Activated CD4-positive, alpha-beta memory T cell treated with anti-CD3 and anti-CD28 coated beads for 36 hours (primary cell): ENCODE measurements at regions of chr3 and their contacts with region 1.

Region 1: DNA sequence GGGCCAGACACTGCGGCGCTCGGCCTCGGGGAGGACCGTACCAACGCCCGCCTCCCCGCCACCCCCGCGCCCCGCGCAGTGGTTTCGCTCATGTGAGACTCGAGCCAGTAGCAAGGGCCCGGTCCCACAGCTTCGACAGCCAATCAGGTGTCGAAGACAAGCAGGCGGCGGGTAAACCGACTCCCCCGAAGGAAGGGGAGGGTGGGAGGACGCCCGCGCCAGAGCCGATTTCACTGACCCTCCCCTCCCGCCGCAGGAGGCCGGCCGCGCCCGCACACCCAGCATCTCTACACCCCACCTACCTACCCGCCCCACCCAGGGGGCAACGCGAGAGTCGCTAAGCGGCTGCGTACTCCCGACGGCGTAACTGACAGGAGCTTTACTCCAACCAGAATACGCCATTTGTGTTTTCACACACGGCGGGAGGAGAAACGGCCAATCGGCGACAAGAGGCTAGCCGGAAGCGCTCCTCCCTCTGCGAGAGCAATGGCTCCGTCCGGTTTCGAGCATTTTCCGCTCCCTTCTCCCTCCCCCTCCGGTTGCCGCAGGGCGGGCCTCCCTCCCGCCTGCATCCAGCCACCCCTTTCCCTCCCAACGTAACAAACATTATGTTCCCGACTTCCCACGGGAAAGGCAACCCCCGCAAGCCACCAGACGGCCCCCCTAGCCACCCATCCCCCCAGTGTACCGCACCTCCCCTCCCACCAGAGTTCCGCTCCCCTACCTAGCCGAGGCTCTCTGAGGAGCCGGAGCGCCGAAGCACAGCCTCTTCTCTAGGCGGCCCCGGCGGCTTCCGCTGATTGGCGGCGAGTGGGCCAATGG is 504 bp upstream of the SETD5 start:
- DNase-seq: peak; percentile 98
- H3K4me3 Mint-ChIP-seq: peak overlapping the region; percentile 94
- H3K27ac Mint-ChIP-seq: peak overlapping the region; percentile 99
- H3K4me1 Mint-ChIP-seq: peaks cover 63% of the 10 kb centered on the region
- H3K27me3 Mint-ChIP-seq: no peaks in the 10 kb centered on the region

Region 2: DNA sequence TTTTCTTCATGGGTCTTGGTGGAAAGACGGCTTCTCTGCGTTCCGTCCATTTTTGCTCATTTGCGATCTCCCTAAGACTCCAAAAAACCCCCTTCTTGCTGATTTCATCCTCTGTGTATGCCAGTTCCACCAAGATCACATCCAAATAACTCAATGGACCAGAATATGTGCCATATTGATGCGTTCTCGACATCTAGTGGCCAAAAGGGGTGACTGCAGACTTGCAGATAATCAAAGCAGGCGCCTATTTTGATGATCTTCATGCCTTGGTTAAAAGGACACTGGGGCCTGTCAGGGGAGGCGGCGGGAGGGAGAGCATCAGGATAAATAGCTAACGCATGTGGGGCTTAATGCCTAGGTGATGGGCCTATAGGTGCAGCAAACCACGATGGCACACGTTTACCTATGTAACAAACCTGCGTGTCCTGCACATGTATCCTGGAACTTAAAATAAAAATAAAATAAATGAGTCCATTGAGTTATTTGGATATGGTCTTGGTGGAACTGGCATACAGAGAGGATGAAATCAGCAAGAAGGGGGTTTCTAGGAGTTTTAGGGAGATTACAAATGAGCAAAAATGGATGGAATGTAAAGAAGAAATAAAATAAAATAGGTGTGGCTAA is 329.4 kb before region 1 on chr3:
- CTCF ChIA-PET with region 1: no interaction called
- POLR2A ChIA-PET with region 1: no interaction called
- intact Hi-C with region 1: no loop called
- DNase-seq: peak; percentile 40
- H3K4me3 Mint-ChIP-seq: no peak overlapping the region
- H3K27ac Mint-ChIP-seq: no peak overlapping the region
- H3K4me1 Mint-ChIP-seq: no peaks in the 10 kb centered on the region
- H3K27me3 Mint-ChIP-seq: no peaks in the 10 kb centered on the region

Region 3: GRCh38 chr3:9280451-9281219 is 116.3 kb before region 1 on chr3:
- CTCF ChIA-PET with region 1: no interaction called
- POLR2A ChIA-PET with region 1: no interaction called
- intact Hi-C with region 1: no loop called
- DNase-seq: no peak
- H3K4me3 Mint-ChIP-seq: no peak overlapping the region
- H3K27ac Mint-ChIP-seq: no peak overlapping the region
- H3K4me1 Mint-ChIP-seq: no peaks in the 10 kb centered on the region
- H3K27me3 Mint-ChIP-seq: peaks cover 1% of the 10 kb centered on the region

Region 4: GRCh38 chr3:9352917-9353752 is 43.8 kb before region 1 on chr3:
- CTCF ChIA-PET with region 1: interaction called, 11 read pairs
- POLR2A ChIA-PET with region 1: interaction called, 4 read pairs
- intact Hi-C with region 1: loop called (anchors 2 kb)
- DNase-seq: peak; percentile 70
- H3K4me3 Mint-ChIP-seq: no peak overlapping the region
- H3K27ac Mint-ChIP-seq: no peak overlapping the region
- H3K4me1 Mint-ChIP-seq: peaks cover 27% of the 10 kb centered on the region
- H3K27me3 Mint-ChIP-seq: no peaks in the 10 kb centered on the region

Region 5: DNA sequence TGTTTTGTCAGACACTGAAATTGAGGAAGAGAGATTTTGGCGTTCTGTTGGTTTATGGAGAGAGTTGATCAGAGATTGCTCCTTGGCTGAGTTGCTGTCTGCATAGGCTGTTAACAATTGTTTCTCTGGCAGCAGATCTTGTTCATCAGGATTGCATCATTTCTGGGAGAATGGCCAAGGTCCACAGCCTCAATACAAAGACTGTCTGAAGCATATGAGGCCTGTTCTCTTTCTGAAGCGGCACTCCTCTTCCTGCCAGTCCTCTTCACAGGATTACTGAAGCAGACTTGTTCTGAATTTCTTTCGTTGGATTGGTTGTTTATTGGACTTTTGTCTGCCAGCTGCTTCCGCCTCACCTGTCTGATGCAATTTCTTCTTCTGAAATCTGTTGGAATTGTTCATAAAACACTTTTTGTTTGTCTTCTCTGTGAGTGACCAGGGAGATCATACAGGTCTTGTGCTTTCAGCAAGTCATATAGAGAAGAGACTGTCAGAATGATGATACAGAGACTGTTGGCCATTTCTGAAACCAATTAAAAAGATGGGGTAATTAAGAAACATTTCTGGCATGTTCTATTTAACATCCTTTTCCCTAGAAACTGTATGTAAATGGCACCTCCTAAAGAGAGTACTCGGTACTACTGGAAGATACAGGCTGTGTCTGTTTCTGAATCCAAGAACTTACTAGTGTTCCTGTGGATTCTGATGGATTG is 26.0 kb after region 1 on chr3:
- CTCF ChIA-PET with region 1: interaction called, 3 read pairs
- POLR2A ChIA-PET with region 1: interaction called, 9 read pairs
- intact Hi-C with region 1: loop called (anchors 1 kb)
- DNase-seq: peak; percentile 40
- H3K4me3 Mint-ChIP-seq: no peak overlapping the region
- H3K27ac Mint-ChIP-seq: peak overlapping the region; percentile 90
- H3K4me1 Mint-ChIP-seq: peaks cover 39% of the 10 kb centered on the region
- H3K27me3 Mint-ChIP-seq: no peaks in the 10 kb centered on the region

Region 6: GRCh38 chr3:9731206-9732079 is 334.5 kb after region 1 on chr3 and contains the start of gene BRPF1:
- CTCF ChIA-PET with region 1: interaction called, 4 read pairs
- POLR2A ChIA-PET with region 1: interaction called, 10 read pairs
- intact Hi-C with region 1: loop called (anchors 1 kb)
- DNase-seq: peak; percentile 100
- H3K4me3 Mint-ChIP-seq: peak within 1 kb of the TSS; percentile 88
- H3K27ac Mint-ChIP-seq: peak within 1 kb of the TSS; percentile 96
- H3K4me1 Mint-ChIP-seq: peaks cover 72% of the 10 kb centered on the region
- H3K27me3 Mint-ChIP-seq: no peaks in the 10 kb centered on the region
- total RNA-seq, gene BRPF1: 25.0 to 27.3 TPM

Region 7: GRCh38 chr3:9792405-9793160 is 395.7 kb after region 1 on chr3 and contains the starts of genes ARPC4 and TADA3:
- CTCF ChIA-PET with region 1: no interaction called
- POLR2A ChIA-PET with region 1: interaction called, 4 read pairs
- intact Hi-C with region 1: loop called (anchors 5 kb)
- DNase-seq: peak; percentile 93
- H3K4me3 Mint-ChIP-seq: peak within 1 kb of the TSS; percentile 99
- H3K27ac Mint-ChIP-seq: peak within 1 kb of the TSS; percentile 99
- H3K4me1 Mint-ChIP-seq: peaks cover 65% of the 10 kb centered on the region
- H3K27me3 Mint-ChIP-seq: no peaks in the 10 kb centered on the region
- total RNA-seq, gene ARPC4: 237 to 240 TPM
- total RNA-seq, gene TADA3: 86.9 to 92.1 TPM

Region 8: GRCh38 chr3:9986237-9986725 is 589.4 kb after region 1 on chr3:
- CTCF ChIA-PET with region 1: no interaction called
- POLR2A ChIA-PET with region 1: no interaction called
- intact Hi-C with region 1: loop called (anchors 1 kb)
- DNase-seq: no peak
- H3K4me3 Mint-ChIP-seq: peak overlapping the region; percentile 89
- H3K27ac Mint-ChIP-seq: peak overlapping the region; percentile 98
- H3K4me1 Mint-ChIP-seq: peaks cover 31% of the 10 kb centered on the region
- H3K27me3 Mint-ChIP-seq: no peaks in the 10 kb centered on the region